HepG2 (cell line): ENCODE measurements at regions of chr13 and their contacts with region 1.

Region 1: DNA sequence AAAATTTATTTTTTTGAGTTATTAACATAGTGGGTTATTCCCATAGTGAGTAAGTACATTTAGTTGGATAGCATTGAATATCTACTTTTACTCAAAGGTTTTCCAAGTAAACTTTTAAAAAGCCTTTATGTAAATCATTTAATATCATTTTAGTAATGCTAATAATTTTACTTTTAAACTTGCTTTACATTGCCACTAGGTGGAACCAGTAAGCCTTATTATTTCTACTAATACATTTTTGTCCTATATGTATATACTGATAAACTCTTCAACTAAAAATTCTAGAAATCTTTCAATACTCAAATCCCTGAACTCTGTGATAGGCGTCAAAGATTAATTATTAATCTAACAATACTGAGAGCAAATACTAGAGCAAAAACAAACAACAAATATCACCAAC is 1709.2 kb upstream of the PCDH20 start:
- DNase-seq: peak; percentile 5
- ATAC-seq: no peak
- H3K4me3 ChIP-seq: no peak overlapping the region
- H3K27ac ChIP-seq: no peak overlapping the region
- H3K4me1 ChIP-seq: no peaks in the 10 kb centered on the region
- H3K27me3 ChIP-seq: no peaks in the 10 kb centered on the region
- CTCF ChIP-seq: no peak
- EP300 ChIP-seq: no peak
- POLR2A ChIP-seq: no peak
- RAD21 ChIP-seq: no peak

Region 2: GRCh38 chr13:63542770-63543169 is 417.9 kb after region 1 on chr13:
- CTCF ChIA-PET with region 1: no interaction called
- POLR2A ChIA-PET with region 1: no interaction called
- in situ Hi-C with region 1: no loop called
- intact Hi-C with region 1: loop called (anchors 10 kb)
- DNase-seq: no peak
- ATAC-seq: no peak
- H3K4me3 ChIP-seq: no peak overlapping the region
- H3K27ac ChIP-seq: no peak overlapping the region
- H3K4me1 ChIP-seq: no peaks in the 10 kb centered on the region
- H3K27me3 ChIP-seq: no peaks in the 10 kb centered on the region
- CTCF ChIP-seq: no peak
- EP300 ChIP-seq: no peak
- POLR2A ChIP-seq: no peak
- RAD21 ChIP-seq: no peak

Region 3: GRCh38 chr13:63910511-63910910 is 785.6 kb after region 1 on chr13:
- CTCF ChIA-PET with region 1: no interaction called
- POLR2A ChIA-PET with region 1: no interaction called
- in situ Hi-C with region 1: no loop called
- intact Hi-C with region 1: no loop called
- DNase-seq: peak; percentile 3
- ATAC-seq: no peak; the same call in 2 of the 3 replicates
- H3K4me3 ChIP-seq: no peak overlapping the region
- H3K27ac ChIP-seq: no peak overlapping the region
- H3K4me1 ChIP-seq: no peaks in the 10 kb centered on the region
- H3K27me3 ChIP-seq: peaks cover 0 to 5% of the 10 kb centered on the region in 2 experiments; a peak in 1 of 5 replicates
- CTCF ChIP-seq: no peak
- EP300 ChIP-seq: no peak
- POLR2A ChIP-seq: no peak
- RAD21 ChIP-seq: no peak